Right lobe of liver (tissue), 6 donors: ENCODE measurements at regions of chr1 and their contacts with region 1.

Region 1: GRCh38 chr1:48069662-48070432 is 72.7 kb upstream of the TRABD2B start:
- DNase-seq: no peak
- ATAC-seq: no peak
- H3K4me3 ChIP-seq: no peak overlapping the region
- H3K27ac ChIP-seq: no peak overlapping the region
- H3K4me1 ChIP-seq: peaks cover 0 to 17% (median 0%) of the 10 kb centered on the region in 4 donors
- H3K27me3 ChIP-seq: no peaks in the 10 kb centered on the region
- CTCF ChIP-seq: no peak
- POLR2A ChIP-seq: no peak

Region 2: GRCh38 chr1:47742890-47743760 is 326.7 kb before region 1 on chr1:
- intact Hi-C with region 1: loop called in 1 of 2 experiments (anchors 5 kb)
- DNase-seq: no peak
- ATAC-seq: peak in 1 of 4 donors; percentile 34
- H3K4me3 ChIP-seq: no peak overlapping the region
- H3K27ac ChIP-seq: no peak overlapping the region
- H3K4me1 ChIP-seq: no peaks in the 10 kb centered on the region
- H3K27me3 ChIP-seq: no peaks in the 10 kb centered on the region
- CTCF ChIP-seq: no peak
- POLR2A ChIP-seq: no peak

Region 3: GRCh38 chr1:48251323-48251722 is 181.5 kb after region 1 on chr1:
- intact Hi-C with region 1: no loop called
- DNase-seq: no peak
- ATAC-seq: no peak
- H3K4me3 ChIP-seq: no peak overlapping the region
- H3K27ac ChIP-seq: no peak overlapping the region
- H3K4me1 ChIP-seq: peaks cover 0 to 3% (median 0%) of the 10 kb centered on the region in 4 donors
- H3K27me3 ChIP-seq: no peaks in the 10 kb centered on the region
- CTCF ChIP-seq: no peak
- POLR2A ChIP-seq: no peak